Ovary (tissue), 10 donors: ENCODE measurements at regions of chr6 and their contacts with region 1.

Region 1: DNA sequence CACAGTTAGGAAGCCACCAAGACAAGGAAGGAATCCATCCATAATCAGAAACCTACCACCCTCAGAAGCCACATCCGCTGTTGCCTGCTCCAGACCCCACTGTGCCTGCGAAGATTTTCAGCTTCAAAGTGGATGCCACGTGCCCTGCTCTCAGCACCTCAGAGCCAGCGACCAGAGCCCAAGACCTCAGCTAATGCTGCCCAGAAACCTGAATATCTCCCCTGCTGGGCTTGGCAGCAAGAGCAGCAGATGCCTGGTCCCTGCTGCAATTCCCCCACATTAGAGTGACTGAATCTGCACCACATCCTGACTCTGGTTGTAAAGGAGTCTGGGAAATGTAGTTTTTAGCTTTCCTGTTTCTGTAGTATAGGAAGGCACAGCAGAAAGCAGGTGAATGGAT is 10.7 kb upstream of the ULBP3 start:
- DNase-seq: no peak
- H3K4me3 ChIP-seq: no peak overlapping the region
- H3K27ac ChIP-seq: no peak overlapping the region
- H3K4me1 ChIP-seq: no peaks in the 10 kb centered on the region
- H3K27me3 ChIP-seq: no peaks in the 10 kb centered on the region
- CTCF ChIP-seq: no peak
- EP300 ChIP-seq: no peak
- POLR2A ChIP-seq: no peak

Region 2: DNA sequence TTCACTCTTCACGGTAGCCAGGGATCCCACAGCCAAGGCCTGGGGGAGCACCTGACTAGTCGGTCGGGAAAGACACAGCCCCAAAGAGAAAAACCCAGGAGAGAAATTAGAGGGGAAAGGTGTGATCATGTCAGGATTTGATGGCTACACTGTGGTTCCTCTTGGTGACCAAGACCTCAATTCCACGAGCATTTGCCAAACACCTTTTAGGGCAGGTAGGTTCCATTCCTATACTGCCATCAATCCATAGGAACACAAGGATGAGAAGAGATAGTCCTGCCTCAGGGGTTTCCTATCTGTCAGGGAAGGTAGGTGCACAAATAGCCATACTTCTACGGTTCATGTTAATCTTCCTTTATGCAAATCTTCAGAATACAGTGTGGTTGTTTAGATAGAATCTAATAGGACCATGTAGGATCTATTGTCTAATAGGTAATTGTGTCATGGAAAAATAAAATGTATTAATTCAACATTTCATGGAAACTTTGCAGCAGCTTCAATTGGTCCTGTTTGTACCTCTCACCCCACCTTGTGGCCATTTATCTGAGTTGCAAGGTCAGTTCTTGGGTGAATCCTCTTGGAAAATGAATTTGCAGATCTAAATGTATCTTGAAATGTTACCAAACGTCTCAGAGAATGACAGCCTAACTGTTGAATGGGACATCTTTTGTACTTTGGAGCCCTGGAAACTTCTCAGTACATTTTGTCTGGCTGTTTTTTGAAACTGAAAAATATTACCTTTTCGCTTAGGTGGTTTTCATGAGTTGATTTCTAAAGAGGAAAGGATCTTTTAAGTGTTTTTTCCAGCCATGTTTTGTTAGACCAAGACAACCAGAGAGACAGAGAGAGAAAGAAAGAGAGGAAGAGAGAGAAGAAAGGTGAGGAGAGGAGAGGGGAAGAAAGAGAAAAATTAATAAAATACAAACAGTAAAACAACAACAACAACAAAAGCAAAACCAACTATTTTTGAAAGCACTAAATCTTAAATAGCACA is 255.5 kb after region 1 on chr6:
- intact Hi-C with region 1: loop called in 1 of 4 experiments (anchors 10 kb)
- DNase-seq: no peak
- H3K4me3 ChIP-seq: no peak overlapping the region
- H3K27ac ChIP-seq: no peak overlapping the region
- H3K4me1 ChIP-seq: no peaks in the 10 kb centered on the region
- H3K27me3 ChIP-seq: no peaks in the 10 kb centered on the region
- CTCF ChIP-seq: peak in 1 of 3 donors; percentile 36
- EP300 ChIP-seq: no peak
- POLR2A ChIP-seq: no peak

Region 3: GRCh38 chr6:150395398-150396009 is 315.9 kb after region 1 on chr6:
- intact Hi-C with region 1: loop called in 2 of 4 experiments (anchors 5 to 10 kb)
- DNase-seq: peak in 2 of 5 donors; percentile 30 to 49
- H3K4me3 ChIP-seq: no peak overlapping the region
- H3K27ac ChIP-seq: no peak overlapping the region
- H3K4me1 ChIP-seq: no peaks in the 10 kb centered on the region
- H3K27me3 ChIP-seq: no peaks in the 10 kb centered on the region
- CTCF ChIP-seq: peak in 1 of 3 donors; percentile 48
- EP300 ChIP-seq: no peak
- POLR2A ChIP-seq: no peak

Region 4: DNA sequence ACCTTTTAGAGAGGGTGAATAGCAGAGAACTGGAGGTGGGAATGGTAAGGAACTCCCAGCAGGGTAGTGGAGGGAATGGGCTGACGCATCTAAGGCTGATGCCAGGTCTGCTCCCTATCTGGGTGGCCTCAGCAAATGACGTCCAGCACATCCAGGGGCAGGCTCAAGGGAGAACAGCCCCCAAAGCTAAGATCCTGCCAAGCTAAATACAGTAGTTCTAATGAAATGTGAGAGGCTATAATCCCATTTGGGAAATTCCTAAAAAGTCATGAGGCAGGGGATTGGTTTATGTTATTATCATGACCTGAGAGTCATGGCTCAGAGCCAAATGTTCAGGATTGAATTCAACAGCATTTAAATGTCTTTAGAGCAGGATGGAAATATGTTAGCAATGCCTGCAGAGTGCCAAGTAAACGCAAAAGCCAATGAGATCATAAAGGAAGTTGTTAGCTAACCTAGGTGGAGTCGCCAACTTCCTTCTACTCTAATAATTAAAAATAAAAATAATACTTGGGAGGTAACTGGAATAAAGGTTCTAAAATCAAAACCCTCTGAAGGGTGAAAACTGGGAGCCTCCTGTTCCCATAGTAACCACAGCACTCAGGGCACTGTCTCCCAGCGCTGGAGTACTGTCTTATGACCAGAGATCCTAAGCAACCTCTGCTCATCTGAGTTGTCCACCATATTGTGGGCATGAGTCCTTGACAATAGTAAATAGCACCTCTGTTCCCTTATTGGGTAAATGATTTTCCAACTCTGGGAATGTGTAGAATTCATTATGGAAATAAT is 324.0 kb after region 1 on chr6:
- intact Hi-C with region 1: loop called in 2 of 4 experiments (anchors 5 to 10 kb)
- DNase-seq: no peak
- H3K4me3 ChIP-seq: no peak overlapping the region
- H3K27ac ChIP-seq: no peak overlapping the region
- H3K4me1 ChIP-seq: peaks cover 1% of the 10 kb centered on the region
- H3K27me3 ChIP-seq: no peaks in the 10 kb centered on the region
- CTCF ChIP-seq: no peak
- EP300 ChIP-seq: no peak
- POLR2A ChIP-seq: no peak

Region 5: DNA sequence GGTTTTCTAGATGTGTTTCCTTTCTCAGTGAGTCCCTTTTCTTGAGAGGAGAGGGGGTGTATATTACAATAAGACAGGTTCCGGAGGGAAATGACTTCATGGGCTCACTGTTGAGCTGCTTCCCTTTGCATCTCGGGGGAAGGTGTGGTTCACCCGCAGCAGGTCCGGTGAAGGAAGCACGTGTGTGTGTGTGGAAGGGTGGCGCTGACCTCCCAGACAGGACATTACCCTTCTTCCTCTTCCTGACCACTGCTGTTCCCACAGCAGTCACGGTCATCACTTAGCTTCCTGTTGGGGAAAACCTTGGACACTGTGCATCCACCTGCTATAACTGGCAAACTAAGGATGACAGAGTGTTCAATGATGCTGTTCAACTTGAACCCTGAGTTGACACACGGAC is 603.7 kb after region 1 on chr6:
- intact Hi-C with region 1: no loop called
- DNase-seq: peak in 1 of 5 donors; percentile 46
- H3K4me3 ChIP-seq: no peak overlapping the region
- H3K27ac ChIP-seq: no peak overlapping the region
- H3K4me1 ChIP-seq: peaks cover 5% of the 10 kb centered on the region
- H3K27me3 ChIP-seq: no peaks in the 10 kb centered on the region
- CTCF ChIP-seq: no peak
- EP300 ChIP-seq: no peak
- POLR2A ChIP-seq: no peak